Panc1 (cell line): ENCODE measurements at regions of chr19 and their contacts with region 1.

Region 1: DNA sequence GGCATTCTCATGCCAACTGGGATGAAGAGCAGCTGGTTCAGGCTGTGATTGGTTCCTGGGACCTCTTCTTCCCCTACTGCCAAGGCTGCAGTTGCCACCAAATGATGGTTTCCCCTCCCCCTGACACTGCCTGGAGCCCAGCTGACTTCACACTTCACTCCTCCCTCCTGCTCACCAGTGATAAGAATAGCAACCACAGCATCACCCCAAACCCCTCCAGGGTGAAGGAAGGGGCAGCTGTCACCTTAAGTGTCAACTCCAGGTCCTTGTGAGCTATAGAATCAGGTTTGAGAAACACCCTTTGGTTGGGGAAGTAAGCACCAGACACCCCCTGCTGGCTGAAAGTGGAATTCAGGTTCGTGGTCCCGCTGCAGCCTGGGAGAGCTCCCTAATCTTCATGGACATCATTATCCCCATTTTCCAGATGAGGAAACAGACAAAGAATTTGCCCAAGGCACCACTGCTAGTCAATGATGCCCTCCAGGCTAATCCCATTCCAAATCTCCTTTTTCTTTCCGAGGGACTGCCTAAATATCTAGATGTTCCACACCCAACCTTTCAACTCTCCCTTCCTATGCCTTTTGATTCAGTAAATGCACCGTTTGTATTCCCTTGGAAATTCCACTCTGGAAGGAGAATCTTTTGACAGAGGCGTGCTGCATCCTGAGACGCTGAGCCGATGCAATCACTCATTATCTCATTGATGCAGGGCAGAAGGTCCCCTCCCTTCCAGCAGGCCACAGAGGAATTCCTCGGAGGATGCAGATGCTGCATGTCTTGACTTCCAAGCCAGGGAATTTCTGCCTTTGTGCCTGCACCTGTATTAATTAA is 50.6 kb upstream of the UQCRFS1 start:
- DNase-seq: peak; percentile 18
- ATAC-seq: peak; percentile 79
- H3K4me3 ChIP-seq: no peak overlapping the region
- H3K27ac ChIP-seq: no peak overlapping the region
- H3K4me1 ChIP-seq: no peaks in the 10 kb centered on the region
- H3K27me3 ChIP-seq: peaks cover 2% of the 10 kb centered on the region; the same call in 1 of the 2 replicates
- CTCF ChIP-seq: peak; percentile 95

Region 2: DNA sequence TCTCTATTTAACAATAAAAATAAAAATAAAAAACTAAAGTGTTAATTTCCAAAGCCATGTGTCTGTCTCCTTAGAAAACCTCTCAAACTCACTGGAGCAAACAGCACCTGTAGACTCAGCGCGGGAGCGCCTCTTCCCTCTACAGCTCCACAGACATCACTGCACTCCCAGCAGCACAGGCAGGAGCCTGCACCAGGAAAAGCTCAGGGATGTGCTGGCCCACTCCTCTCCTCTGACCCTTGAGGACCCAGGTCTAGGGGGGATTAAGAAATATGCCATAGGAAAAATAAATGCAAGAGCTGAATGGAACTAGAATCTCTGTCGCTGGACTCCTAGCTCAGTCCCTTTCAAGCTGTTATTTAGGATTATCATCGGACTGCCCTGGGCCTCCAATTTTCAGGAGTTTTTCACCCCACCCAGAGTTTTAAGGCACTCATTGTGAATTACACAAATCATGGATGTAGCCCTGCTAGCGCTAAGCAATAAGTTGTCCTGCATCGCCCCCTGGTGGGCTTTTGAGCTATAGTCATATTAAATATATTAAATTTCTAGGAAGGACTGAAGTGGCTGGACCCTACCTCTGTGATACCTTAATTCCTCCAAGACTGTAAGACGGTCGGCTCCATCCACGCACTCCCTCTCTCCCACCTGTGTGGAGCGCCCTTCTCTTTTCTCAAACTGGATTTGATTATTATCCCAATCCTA is 384.5 kb before region 1 on chr19:
- CTCF ChIA-PET with region 1: no interaction called
- POLR2A ChIA-PET with region 1: no interaction called
- in situ Hi-C with region 1: no loop called
- intact Hi-C with region 1: loop called (anchors 10 kb)
- DNase-seq: peak; percentile 33
- ATAC-seq: peak; percentile 89
- H3K4me3 ChIP-seq: no peak overlapping the region
- H3K27ac ChIP-seq: no peak overlapping the region
- H3K4me1 ChIP-seq: no peaks in the 10 kb centered on the region
- H3K27me3 ChIP-seq: no peaks in the 10 kb centered on the region
- CTCF ChIP-seq: peak; percentile 80

Region 3: GRCh38 chr19:29084266-29084665 is 179.3 kb before region 1 on chr19:
- CTCF ChIA-PET with region 1: interaction called, 7 read pairs
- POLR2A ChIA-PET with region 1: no interaction called
- in situ Hi-C with region 1: no loop called
- intact Hi-C with region 1: loop called (anchors 10 kb)
- DNase-seq: no peak
- ATAC-seq: peak; percentile 89
- H3K4me3 ChIP-seq: no peak overlapping the region
- H3K27ac ChIP-seq: no peak overlapping the region
- H3K4me1 ChIP-seq: no peaks in the 10 kb centered on the region
- H3K27me3 ChIP-seq: peaks cover 2% of the 10 kb centered on the region
- CTCF ChIP-seq: peak; percentile 78; the same call in 1 of the 2 replicates

Region 4: DNA sequence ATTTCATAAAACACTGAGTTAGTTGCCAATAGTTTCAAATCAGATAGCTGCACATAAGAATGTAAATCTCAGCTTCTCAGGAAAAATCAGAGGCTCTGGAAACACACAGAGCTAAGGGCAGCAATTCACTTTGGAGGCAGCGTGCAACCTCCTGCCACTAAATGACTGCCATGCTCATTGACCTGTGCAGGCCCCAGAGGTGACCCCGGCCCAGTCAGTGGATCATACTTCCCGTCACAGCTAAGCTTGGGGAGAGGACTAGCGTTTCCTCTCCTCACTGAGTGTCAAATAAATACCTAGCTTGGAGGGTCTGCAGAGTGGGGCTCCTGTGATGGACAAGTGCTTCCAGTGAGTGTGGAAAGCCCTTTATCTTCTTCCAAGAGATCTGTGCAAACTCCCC is 117.8 kb before region 1 on chr19:
- CTCF ChIA-PET with region 1: interaction called, 11 read pairs
- POLR2A ChIA-PET with region 1: no interaction called
- in situ Hi-C with region 1: no loop called
- intact Hi-C with region 1: no loop called
- DNase-seq: no peak
- ATAC-seq: no peak
- H3K4me3 ChIP-seq: no peak overlapping the region
- H3K27ac ChIP-seq: no peak overlapping the region
- H3K4me1 ChIP-seq: no peaks in the 10 kb centered on the region
- H3K27me3 ChIP-seq: peaks cover 2% of the 10 kb centered on the region; the same call in 1 of the 2 replicates
- CTCF ChIP-seq: no peak

Region 5: GRCh38 chr19:29201855-29202254 is 61.7 kb before region 1 on chr19:
- CTCF ChIA-PET with region 1: interaction called, 12 read pairs
- POLR2A ChIA-PET with region 1: no interaction called
- in situ Hi-C with region 1: no loop called
- intact Hi-C with region 1: no loop called
- DNase-seq: no peak
- ATAC-seq: no peak; the same call in 1 of the 2 replicates
- H3K4me3 ChIP-seq: no peak overlapping the region
- H3K27ac ChIP-seq: no peak overlapping the region
- H3K4me1 ChIP-seq: no peaks in the 10 kb centered on the region
- H3K27me3 ChIP-seq: no peaks in the 10 kb centered on the region
- CTCF ChIP-seq: no peak; the same call in 1 of the 2 replicates

Region 6: GRCh38 chr19:29372921-29373797 is 109.6 kb after region 1 on chr19:
- CTCF ChIA-PET with region 1: no interaction called
- POLR2A ChIA-PET with region 1: no interaction called
- in situ Hi-C with region 1: no loop called
- intact Hi-C with region 1: no loop called
- DNase-seq: no peak
- ATAC-seq: no peak
- H3K4me3 ChIP-seq: no peak overlapping the region
- H3K27ac ChIP-seq: no peak overlapping the region
- H3K4me1 ChIP-seq: no peaks in the 10 kb centered on the region
- H3K27me3 ChIP-seq: peaks cover 13% of the 10 kb centered on the region
- CTCF ChIP-seq: no peak

Region 7: GRCh38 chr19:29528350-29528945 is 264.9 kb after region 1 on chr19:
- CTCF ChIA-PET with region 1: interaction called, 3 read pairs
- POLR2A ChIA-PET with region 1: no interaction called
- in situ Hi-C with region 1: no loop called
- intact Hi-C with region 1: loop called (anchors 10 kb)
- DNase-seq: no peak
- ATAC-seq: peak; percentile 91
- H3K4me3 ChIP-seq: peak overlapping the region; percentile 23 to 30; a peak in 3 of 4 replicates
- H3K27ac ChIP-seq: no peak overlapping the region
- H3K4me1 ChIP-seq: no peaks in the 10 kb centered on the region
- H3K27me3 ChIP-seq: peaks cover 7% of the 10 kb centered on the region; the same call in 1 of the 2 replicates
- CTCF ChIP-seq: peak; percentile 100